Panc1 (cell line): ENCODE measurements at regions of chr21 and their contacts with region 1.

Region 1: GRCh38 chr21:15483138-15483780 is 246.5 kb upstream of the USP25 start:
- DNase-seq: peak; percentile 61
- ATAC-seq: peak; percentile 94
- H3K4me3 ChIP-seq: no peak overlapping the region
- H3K27ac ChIP-seq: no peak overlapping the region
- H3K4me1 ChIP-seq: no peaks in the 10 kb centered on the region
- H3K27me3 ChIP-seq: no peaks in the 10 kb centered on the region
- CTCF ChIP-seq: peak; percentile 87

Region 2: GRCh38 chr21:14388282-14388681 is 1095.0 kb before region 1 on chr21:
- CTCF ChIA-PET with region 1: no interaction called
- POLR2A ChIA-PET with region 1: no interaction called
- in situ Hi-C with region 1: no loop called
- intact Hi-C with region 1: loop called (anchors 5 kb)
- DNase-seq: no peak
- ATAC-seq: no peak
- H3K4me3 ChIP-seq: no peak overlapping the region
- H3K27ac ChIP-seq: no peak overlapping the region
- H3K4me1 ChIP-seq: peaks cover 4% of the 10 kb centered on the region; the same call in 1 of the 2 replicates
- H3K27me3 ChIP-seq: no peaks in the 10 kb centered on the region
- CTCF ChIP-seq: no peak

Region 3: GRCh38 chr21:14864211-14865021 is 618.8 kb before region 1 on chr21:
- CTCF ChIA-PET with region 1: no interaction called
- POLR2A ChIA-PET with region 1: no interaction called
- in situ Hi-C with region 1: no loop called
- intact Hi-C with region 1: loop called (anchors 2 kb)
- DNase-seq: no peak
- ATAC-seq: peak; percentile 95
- H3K4me3 ChIP-seq: no peak overlapping the region
- H3K27ac ChIP-seq: peak overlapping the region; percentile 29
- H3K4me1 ChIP-seq: peaks cover 4% of the 10 kb centered on the region; the same call in 1 of the 2 replicates
- H3K27me3 ChIP-seq: no peaks in the 10 kb centered on the region
- CTCF ChIP-seq: peak; percentile 79

Region 4: DNA sequence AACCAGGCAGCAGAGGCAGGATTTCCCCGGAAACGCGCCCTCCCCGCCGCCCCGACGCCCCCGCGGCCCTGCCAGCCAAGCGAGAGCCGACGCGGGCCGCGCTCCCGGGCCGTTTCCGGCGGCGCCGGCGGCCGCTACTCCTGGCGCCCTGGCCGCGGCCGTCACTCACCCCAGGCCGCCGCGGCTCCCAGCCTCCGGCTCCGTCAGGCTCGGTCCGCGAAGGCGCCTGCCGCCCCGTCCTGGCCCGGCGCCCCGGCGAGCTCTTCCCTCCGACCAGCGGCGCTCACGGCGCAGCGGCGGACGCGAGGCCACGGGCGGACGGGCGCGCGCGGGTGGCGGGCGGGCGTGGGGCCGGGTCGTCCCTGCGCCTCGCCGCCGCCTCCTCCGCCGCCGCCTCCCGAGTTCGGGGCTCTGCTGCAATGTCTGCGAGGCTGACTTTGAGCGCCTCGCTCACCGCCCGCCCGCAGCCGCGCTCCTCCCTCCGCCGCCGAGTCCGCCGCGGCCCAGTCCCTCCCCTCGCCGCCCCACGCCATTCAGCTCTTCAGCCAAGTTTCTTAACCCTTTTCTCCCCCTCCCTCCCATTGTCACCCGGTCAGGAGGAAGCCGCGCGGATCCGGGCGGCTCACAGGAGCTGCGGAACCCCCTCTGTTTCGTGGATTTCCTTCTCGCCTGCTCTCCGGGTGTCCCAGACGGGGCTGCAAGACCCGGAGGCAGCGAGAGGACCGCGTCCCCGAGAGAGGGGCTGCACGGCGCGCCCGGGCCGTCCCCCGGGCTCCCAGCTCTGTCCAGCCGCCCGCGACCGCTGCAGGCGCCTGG is 418.5 kb before region 1 on chr21 and contains the start of gene NRIP1:
- CTCF ChIA-PET with region 1: interaction called, 3 read pairs
- POLR2A ChIA-PET with region 1: no interaction called
- in situ Hi-C with region 1: no loop called
- intact Hi-C with region 1: loop called (anchors 5 kb)
- DNase-seq: no peak
- ATAC-seq: peak; percentile 92
- H3K4me3 ChIP-seq: peak within 1 kb of the TSS; percentile 62 to 84
- H3K27ac ChIP-seq: peak within 1 kb of the TSS; percentile 78
- H3K4me1 ChIP-seq: peaks cover 23% of the 10 kb centered on the region
- H3K27me3 ChIP-seq: no peaks in the 10 kb centered on the region
- CTCF ChIP-seq: no peak
- total RNA-seq, gene NRIP1: 19.1 TPM

Region 5: GRCh38 chr21:15436031-15436430 is 47.2 kb before region 1 on chr21:
- CTCF ChIA-PET with region 1: no interaction called
- POLR2A ChIA-PET with region 1: interaction called, 21 read pairs
- in situ Hi-C with region 1: no loop called
- intact Hi-C with region 1: no loop called
- DNase-seq: no peak
- ATAC-seq: no peak
- H3K4me3 ChIP-seq: no peak overlapping the region
- H3K27ac ChIP-seq: no peak overlapping the region
- H3K4me1 ChIP-seq: no peaks in the 10 kb centered on the region
- H3K27me3 ChIP-seq: no peaks in the 10 kb centered on the region
- CTCF ChIP-seq: no peak

Region 6: DNA sequence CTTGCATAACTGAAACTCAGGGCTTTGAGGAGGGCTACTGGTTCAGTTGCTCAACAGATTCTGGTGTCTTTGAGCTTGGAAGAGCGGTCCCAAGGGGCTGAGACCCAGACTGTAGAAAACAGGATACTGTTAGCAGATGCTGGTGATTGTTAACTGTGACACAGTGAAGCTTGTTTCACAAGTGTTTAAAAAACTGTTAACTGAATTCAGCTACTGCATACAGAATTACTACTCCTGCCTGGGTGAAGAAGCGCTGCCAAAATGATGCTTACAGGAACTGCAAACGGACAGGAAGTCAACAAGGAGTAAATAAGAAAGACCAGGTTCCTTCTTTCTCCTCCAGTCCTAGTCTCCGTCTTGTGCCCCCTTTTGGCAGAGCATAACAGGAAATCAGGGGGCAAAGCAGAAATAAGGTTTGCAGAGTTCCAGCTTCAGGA is 51.2 kb after region 1 on chr21:
- CTCF ChIA-PET with region 1: no interaction called
- POLR2A ChIA-PET with region 1: no interaction called
- in situ Hi-C with region 1: no loop called
- intact Hi-C with region 1: no loop called
- DNase-seq: no peak
- ATAC-seq: no peak
- H3K4me3 ChIP-seq: no peak overlapping the region
- H3K27ac ChIP-seq: no peak overlapping the region
- H3K4me1 ChIP-seq: no peaks in the 10 kb centered on the region
- H3K27me3 ChIP-seq: no peaks in the 10 kb centered on the region
- CTCF ChIP-seq: no peak

Region 7: GRCh38 chr21:15604424-15604823 is 121.2 kb after region 1 on chr21:
- CTCF ChIA-PET with region 1: no interaction called
- POLR2A ChIA-PET with region 1: no interaction called
- in situ Hi-C with region 1: no loop called
- intact Hi-C with region 1: no loop called
- DNase-seq: no peak
- ATAC-seq: no peak
- H3K4me3 ChIP-seq: no peak overlapping the region
- H3K27ac ChIP-seq: no peak overlapping the region
- H3K4me1 ChIP-seq: no peaks in the 10 kb centered on the region
- H3K27me3 ChIP-seq: no peaks in the 10 kb centered on the region
- CTCF ChIP-seq: no peak